CD14-positive monocyte (primary cell): ENCODE measurements at regions of chr1 and their contacts with region 1.

Region 1: DNA sequence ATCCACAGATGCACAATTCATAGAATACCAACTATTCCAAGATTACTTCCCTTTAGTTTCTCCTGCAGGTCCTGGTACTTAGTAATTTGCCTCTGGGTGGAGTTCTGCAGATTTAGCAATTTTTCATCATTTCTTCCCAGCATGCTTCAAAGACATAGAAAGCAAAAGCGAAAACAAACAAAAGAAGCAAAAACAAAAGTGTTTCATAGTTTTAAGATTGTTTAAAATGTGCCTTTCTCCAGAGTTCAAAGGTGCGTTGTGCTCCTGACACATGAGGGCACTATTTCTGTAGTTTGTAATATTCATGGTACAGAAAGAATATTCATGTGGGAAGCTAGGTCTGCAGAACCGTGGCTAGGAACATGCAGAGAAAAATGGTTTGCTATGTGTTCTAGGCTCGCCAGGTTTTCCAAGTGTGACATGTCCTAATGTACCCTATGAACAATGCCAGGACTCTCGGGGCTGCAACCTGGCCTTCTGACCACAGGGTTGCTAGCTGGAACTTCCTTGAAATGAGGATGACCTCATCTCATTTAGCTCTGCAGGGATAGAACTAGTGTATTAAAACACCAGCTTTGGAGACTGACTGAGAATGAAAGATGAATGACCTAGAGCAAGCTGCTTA is 30.0 kb upstream of the RCSD1 start:
- DNase-seq: peak; percentile 73 to 86 (median 82)
- H3K4me3 ChIP-seq: peak overlapping the region; percentile 3 to 52 (median 16)
- H3K4me3 Mint-ChIP-seq: peak overlapping the region; percentile 24 to 65
- H3K27ac ChIP-seq: peak overlapping the region; percentile 25 to 83
- H3K27ac Mint-ChIP-seq: peak overlapping the region; percentile 93 to 98 (median 96)
- H3K4me1 ChIP-seq: peaks cover 58 to 62% of the 10 kb centered on the region in 2 donors
- H3K4me1 Mint-ChIP-seq: peaks cover 63% of the 10 kb centered on the region
- H3K27me3 ChIP-seq: no peaks in the 10 kb centered on the region
- H3K27me3 Mint-ChIP-seq: peaks cover 0 to 4% (median 2%) of the 10 kb centered on the region in 3 donors
- CTCF ChIP-seq: peak; percentile 27

Region 2: GRCh38 chr1:167563579-167564246 is 36.4 kb before region 1 on chr1:
- intact Hi-C with region 1: loop called (anchors 5 kb)
- DNase-seq: peak; percentile 87 to 90 (median 88)
- H3K4me3 ChIP-seq: peak overlapping the region in 1 of 3 experiments; percentile 33
- H3K4me3 Mint-ChIP-seq: peak overlapping the region; percentile 56 to 75
- H3K27ac ChIP-seq: peak overlapping the region; percentile 79 to 83
- H3K27ac Mint-ChIP-seq: peak overlapping the region; percentile 89 to 98 (median 96)
- H3K4me1 ChIP-seq: peaks cover 52 to 58% of the 10 kb centered on the region in 2 donors
- H3K4me1 Mint-ChIP-seq: peaks cover 58% of the 10 kb centered on the region
- H3K27me3 ChIP-seq: no peaks in the 10 kb centered on the region
- H3K27me3 Mint-ChIP-seq: peaks cover 0 to 3% (median 2%) of the 10 kb centered on the region in 3 donors
- CTCF ChIP-seq: no peak

Region 3: GRCh38 chr1:167617153-167618147 is 17.4 kb after region 1 on chr1:
- intact Hi-C with region 1: loop called in 1 of 2 experiments (anchors 2 kb)
- DNase-seq: peak; percentile 65 to 84 (median 82)
- H3K4me3 ChIP-seq: peak overlapping the region; percentile 3 to 56 (median 20)
- H3K4me3 Mint-ChIP-seq: peak overlapping the region; percentile 62 to 65
- H3K27ac ChIP-seq: peak overlapping the region; percentile 80 to 82
- H3K27ac Mint-ChIP-seq: peak overlapping the region; percentile 93 to 98 (median 95)
- H3K4me1 ChIP-seq: peaks cover 74 to 81% of the 10 kb centered on the region in 2 donors
- H3K4me1 Mint-ChIP-seq: peaks cover 73% of the 10 kb centered on the region
- H3K27me3 ChIP-seq: no peaks in the 10 kb centered on the region
- H3K27me3 Mint-ChIP-seq: peaks cover 0 to 6% (median 0%) of the 10 kb centered on the region in 3 donors
- CTCF ChIP-seq: no peak

Region 4: GRCh38 chr1:167635156-167635648 is 35.1 kb after region 1 on chr1:
- intact Hi-C with region 1: loop called (anchors 5 kb)
- DNase-seq: no peak
- H3K4me3 ChIP-seq: peak overlapping the region in 1 of 3 experiments; percentile 37
- H3K4me3 Mint-ChIP-seq: no peak overlapping the region
- H3K27ac ChIP-seq: peak overlapping the region; percentile 43 to 94
- H3K27ac Mint-ChIP-seq: peak overlapping the region in 6 of 7 donors; percentile 15 to 98 (median 68)
- H3K4me1 ChIP-seq: peaks cover 76 to 82% of the 10 kb centered on the region in 2 donors
- H3K4me1 Mint-ChIP-seq: peaks cover 91% of the 10 kb centered on the region
- H3K27me3 ChIP-seq: no peaks in the 10 kb centered on the region
- H3K27me3 Mint-ChIP-seq: no peaks in the 10 kb centered on the region
- CTCF ChIP-seq: no peak

Region 5: GRCh38 chr1:167687919-167688519 is 88.0 kb after region 1 on chr1:
- intact Hi-C with region 1: loop called in 1 of 2 experiments (anchors 5 kb)
- DNase-seq: peak; percentile 49 to 75 (median 63)
- H3K4me3 ChIP-seq: no peak overlapping the region
- H3K4me3 Mint-ChIP-seq: no peak overlapping the region
- H3K27ac ChIP-seq: peak overlapping the region; percentile 45 to 73
- H3K27ac Mint-ChIP-seq: peak overlapping the region in 6 of 7 donors; percentile 7 to 84 (median 56)
- H3K4me1 ChIP-seq: peaks cover 14 to 22% of the 10 kb centered on the region in 2 donors
- H3K4me1 Mint-ChIP-seq: peaks cover 29% of the 10 kb centered on the region
- H3K27me3 ChIP-seq: no peaks in the 10 kb centered on the region
- H3K27me3 Mint-ChIP-seq: no peaks in the 10 kb centered on the region
- CTCF ChIP-seq: peak; percentile 87